ENCODE measurements at regions of chr16 and their contacts with region 1.

Region 1: GRCh38 chr16:23742766-23743165 is 12.1 kb upstream of the CHP2 start:
- DNase-seq: no peak
- H3K4me3 ChIP-seq: no peak overlapping the region
- H3K27ac ChIP-seq: no peak overlapping the region
- H3K27me3 ChIP-seq: peaks cover 0 to 4% (median 0%) of the 10 kb centered on the region in 45 donors
- CTCF ChIP-seq: peak in 6 of 56 donors; percentile 8 to 21 (median 16)

Region 2: DNA sequence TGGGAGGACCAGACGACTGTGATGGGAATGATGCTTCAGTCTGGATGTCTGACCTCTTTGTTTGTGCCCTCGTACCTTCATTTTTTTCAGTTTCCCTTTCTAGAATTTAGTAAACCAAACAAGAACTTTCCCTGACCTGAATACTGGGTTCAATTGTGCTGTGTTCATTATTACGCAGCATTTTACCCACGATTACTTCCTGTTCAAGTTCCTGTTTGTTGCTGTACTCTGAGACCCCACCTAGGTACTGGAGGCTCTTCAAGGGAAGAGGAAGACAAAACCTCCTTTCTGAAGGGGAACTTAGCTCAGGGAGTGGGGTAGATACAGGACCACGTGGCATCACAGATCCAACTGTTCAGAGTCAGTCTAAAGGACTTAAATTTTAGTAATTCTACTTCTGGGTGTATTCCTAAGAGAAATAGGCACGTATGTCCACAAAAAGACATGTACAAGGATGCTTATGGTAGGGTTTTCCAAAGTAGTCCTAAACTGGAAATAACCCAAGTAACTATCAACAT is 83.8 kb after region 1 on chr16:
- intact Hi-C with region 1: no loop called
- DNase-seq: no peak
- H3K4me3 ChIP-seq: no peak overlapping the region
- H3K27ac ChIP-seq: no peak overlapping the region
- H3K27me3 ChIP-seq: no peaks in the 10 kb centered on the region
- CTCF ChIP-seq: no peak

Region 3: DNA sequence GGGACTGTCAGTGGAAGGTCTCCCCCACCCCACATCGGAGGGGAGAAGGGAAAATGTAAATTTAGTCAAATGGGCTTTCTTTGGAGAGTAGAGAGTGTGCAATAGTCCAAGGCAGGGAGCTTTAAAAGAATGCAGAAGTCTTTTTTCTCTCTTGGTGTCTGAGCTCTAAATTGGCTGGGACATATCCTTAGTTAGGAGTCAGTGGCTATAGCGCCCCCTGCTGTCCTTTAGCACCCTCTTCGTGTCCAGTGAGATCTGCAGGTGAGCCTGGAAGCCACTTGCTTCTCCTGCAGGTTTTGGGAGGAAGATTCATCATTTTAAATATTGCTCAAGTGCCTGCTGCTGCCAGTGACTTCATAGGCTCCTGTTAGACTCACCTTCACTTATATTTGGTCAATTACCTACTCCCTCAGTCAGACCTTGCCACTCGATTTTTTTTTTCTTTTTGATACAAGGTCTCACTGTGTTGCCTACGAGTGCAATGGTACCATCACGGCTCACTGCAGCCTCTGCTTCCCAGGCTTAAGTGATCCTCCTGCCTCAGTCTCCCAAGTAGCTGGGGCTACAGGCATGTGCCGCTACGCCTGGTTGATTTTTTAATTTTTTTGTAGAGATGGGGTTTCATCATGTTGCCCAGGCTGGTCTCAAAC is 267.8 kb after region 1 on chr16:
- intact Hi-C with region 1: loop called in 1 of 2 experiments (anchors 10 kb)
- DNase-seq: peak; percentile 75 to 95 (median 82)
- H3K4me3 ChIP-seq: no peak overlapping the region
- H3K27ac ChIP-seq: peak overlapping the region in 9 of 59 donors; percentile 5 to 69 (median 26)
- H3K27me3 ChIP-seq: no peaks in the 10 kb centered on the region
- CTCF ChIP-seq: peak; percentile 62 to 96 (median 89)

Region 4: DNA sequence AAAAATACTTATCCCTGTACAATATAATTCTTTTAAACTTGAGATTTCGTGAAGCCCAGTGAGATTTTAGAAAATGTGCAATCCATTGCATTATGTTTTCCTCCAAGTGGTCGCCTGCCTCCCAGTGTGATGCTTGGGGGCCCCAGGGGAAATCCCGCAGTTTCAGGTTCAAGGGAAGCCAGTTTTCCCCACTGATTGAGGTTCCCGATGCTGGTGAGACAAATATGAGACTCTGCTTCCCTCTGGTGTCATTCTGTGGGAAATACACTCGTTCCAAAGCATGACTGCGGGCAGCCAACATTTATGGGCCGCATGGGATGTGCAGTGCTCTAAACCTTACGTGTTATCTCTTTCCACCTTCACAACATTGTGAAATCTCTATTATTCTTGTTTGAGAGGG is 293.8 kb after region 1 on chr16:
- intact Hi-C with region 1: loop called in 1 of 2 experiments (anchors 5 kb)
- DNase-seq: peak in 5 of 10 donors; percentile 19 to 53 (median 41)
- H3K4me3 ChIP-seq: no peak overlapping the region
- H3K27ac ChIP-seq: peak overlapping the region in 1 of 59 donors; percentile 18
- H3K27me3 ChIP-seq: no peaks in the 10 kb centered on the region
- CTCF ChIP-seq: peak; percentile 43 to 90 (median 80)